Ascending aorta (tissue), 2 donors: ENCODE measurements at regions of chr5 and their contacts with region 1.

Region 1: DNA sequence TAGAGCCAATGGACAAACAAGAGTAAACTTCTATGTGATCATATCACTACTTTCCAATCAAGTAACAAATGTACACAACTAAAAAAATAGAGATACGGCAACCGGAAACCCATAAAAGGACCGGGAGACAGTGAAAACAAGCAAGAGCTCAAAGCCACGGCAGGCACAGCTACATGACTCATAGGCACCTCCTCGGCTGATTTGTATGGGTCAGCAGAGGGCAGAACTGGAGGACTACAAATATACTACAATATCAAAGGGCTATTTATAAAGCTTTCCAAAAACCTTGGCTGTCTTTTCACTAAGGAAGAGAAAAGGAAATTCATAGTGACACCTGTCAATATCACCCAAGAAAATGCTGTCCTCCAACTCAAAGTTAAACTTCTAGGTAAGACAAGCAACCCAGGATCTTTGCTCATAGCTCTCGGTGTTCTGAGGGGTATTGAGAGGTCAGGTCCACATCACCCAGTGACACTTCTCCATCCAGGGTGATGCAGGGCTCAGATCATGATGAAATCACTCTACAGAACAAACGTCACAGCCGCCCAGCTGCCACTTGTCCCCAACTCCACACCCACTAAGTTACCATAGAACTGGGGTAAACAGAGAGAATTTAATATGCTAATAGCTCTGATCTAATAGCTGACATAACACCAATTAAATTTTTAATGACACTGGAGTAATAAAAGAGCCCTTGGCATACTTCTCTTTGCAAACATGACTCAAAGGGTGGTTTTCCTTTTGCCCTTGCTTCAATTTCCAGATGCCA is 41.3 kb downstream of the PFDN1 start:
- DNase-seq: peak; percentile 57 to 90
- H3K4me3 ChIP-seq: no peak overlapping the region
- H3K27ac ChIP-seq: peak overlapping the region; percentile 53 to 63
- H3K4me1 ChIP-seq: peaks cover 0 to 5% of the 10 kb centered on the region in 2 donors
- H3K27me3 ChIP-seq: no peaks in the 10 kb centered on the region
- CTCF ChIP-seq: peak in 1 of 3 experiments; percentile 13

Region 2: DNA sequence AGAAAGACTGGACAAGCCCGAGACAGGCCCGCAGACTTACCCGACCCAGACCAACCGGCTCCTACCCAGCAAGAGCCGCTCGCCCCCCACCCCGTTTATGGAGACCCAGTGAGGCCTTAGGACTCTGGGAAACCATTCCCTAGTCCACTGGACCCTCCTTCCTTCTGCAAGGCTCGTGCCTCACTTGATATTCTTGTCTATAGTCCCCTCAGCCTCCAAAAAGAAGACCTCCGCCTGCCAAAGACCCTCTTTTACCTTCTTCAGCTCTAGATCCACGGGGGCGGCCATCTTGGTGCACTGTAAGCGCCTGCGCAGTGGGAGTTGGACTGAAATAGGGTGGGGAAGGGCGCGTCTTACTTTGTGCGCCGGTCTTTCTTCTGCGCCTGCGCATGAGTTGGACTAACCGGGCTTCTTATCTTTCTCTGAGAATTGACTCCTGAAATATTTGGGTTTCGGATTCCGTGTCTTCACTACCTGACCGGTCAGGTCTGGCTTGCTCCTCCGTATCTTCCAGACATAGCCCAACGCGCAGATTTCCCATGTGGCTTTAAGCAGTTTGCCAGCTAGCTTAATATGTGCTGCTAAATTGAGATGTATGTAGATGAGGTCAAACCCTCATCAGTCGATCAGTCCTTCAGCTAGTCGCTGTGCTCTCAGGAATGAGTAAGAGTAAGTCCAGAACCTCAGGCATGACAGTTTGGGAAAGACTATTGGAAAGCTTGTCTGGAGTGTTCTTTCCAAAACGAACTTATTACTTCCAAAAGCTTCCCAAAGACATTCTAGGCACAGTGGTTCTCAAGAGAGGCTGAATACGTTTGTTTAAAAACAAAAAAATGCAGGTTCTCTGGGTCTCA is 41.4 kb after region 1 on chr5 and contains the start of gene PFDN1:
- intact Hi-C with region 1: loop called (anchors 2 kb)
- DNase-seq: peak; percentile 69 to 96
- H3K4me3 ChIP-seq: peak within 1 kb of the TSS; percentile 82 to 95
- H3K27ac ChIP-seq: peak within 1 kb of the TSS; percentile 79 to 84
- H3K4me1 ChIP-seq: peaks cover 6 to 20% of the 10 kb centered on the region in 2 donors
- H3K27me3 ChIP-seq: no peaks in the 10 kb centered on the region
- CTCF ChIP-seq: no peak
- total RNA-seq, gene PFDN1: 135 TPM